Sigmoid colon (tissue), 7 donors: ENCODE measurements at regions of chr6 and their contacts with region 1.

Region 1: DNA sequence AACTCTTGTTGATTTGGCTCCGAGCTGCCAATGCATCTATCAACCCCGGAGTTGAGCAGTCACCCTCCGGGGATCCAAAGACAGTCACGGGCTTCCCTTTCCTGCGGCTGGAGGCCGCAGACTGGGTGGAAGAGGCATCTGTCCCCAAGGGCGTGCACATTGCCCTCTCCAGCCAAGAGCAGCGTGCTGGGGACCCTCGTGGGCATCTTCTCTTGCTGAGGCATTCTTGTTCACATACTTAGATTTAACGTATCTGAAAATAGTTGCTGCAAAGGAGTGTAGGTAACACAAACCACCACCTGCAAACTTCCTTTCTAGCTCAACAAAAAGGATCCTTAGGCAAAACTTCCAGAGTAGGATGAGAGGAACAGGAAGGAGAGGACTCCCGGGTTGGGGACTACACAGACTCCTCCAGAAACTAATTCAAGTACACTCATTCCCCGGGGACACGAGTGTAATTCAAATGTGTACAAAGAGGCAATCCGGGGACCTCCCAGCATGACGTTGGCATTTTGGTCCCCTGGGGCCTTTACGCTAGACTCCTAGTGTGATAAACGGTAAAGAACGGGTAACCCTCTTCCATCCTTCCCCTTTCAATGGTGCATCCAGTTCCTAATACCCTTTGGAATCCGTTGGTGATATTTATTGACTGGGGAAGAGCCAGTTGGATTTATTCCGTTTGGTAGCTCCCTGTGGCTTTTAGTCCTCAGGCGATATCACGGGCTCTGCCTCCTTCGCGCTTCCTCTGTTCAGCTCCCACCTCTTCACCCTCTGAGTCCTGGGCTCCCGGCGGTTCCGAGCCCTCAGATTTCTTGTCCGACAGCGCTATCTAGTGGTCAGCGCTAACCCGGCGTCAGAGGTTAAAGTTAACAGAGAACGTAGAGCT is 2.7 kb upstream of the COL12A1 start:
- DNase-seq: peak; percentile 93
- H3K4me3 ChIP-seq: peak overlapping the region in 1 of 4 donors; percentile 29
- H3K27ac ChIP-seq: peak overlapping the region; percentile 7 to 65 (median 40)
- H3K4me1 ChIP-seq: peaks cover 0 to 40% (median 12%) of the 10 kb centered on the region in 4 donors
- H3K27me3 ChIP-seq: no peaks in the 10 kb centered on the region
- CTCF ChIP-seq: peak; percentile 74 to 87 (median 82)
- EP300 ChIP-seq: no peak
- POLR2A ChIP-seq: no peak

Region 2: GRCh38 chr6:73675466-73676098 is 1533.0 kb before region 1 on chr6:
- intact Hi-C with region 1: loop called (anchors 5 kb)
- DNase-seq: peak; percentile 84
- H3K4me3 ChIP-seq: no peak overlapping the region
- H3K27ac ChIP-seq: no peak overlapping the region
- H3K4me1 ChIP-seq: peaks cover 0 to 7% (median 3%) of the 10 kb centered on the region in 4 donors
- H3K27me3 ChIP-seq: peaks cover 0 to 8% (median 0%) of the 10 kb centered on the region in 3 donors
- CTCF ChIP-seq: peak; percentile 81 to 84 (median 82)
- EP300 ChIP-seq: no peak
- POLR2A ChIP-seq: no peak

Region 3: DNA sequence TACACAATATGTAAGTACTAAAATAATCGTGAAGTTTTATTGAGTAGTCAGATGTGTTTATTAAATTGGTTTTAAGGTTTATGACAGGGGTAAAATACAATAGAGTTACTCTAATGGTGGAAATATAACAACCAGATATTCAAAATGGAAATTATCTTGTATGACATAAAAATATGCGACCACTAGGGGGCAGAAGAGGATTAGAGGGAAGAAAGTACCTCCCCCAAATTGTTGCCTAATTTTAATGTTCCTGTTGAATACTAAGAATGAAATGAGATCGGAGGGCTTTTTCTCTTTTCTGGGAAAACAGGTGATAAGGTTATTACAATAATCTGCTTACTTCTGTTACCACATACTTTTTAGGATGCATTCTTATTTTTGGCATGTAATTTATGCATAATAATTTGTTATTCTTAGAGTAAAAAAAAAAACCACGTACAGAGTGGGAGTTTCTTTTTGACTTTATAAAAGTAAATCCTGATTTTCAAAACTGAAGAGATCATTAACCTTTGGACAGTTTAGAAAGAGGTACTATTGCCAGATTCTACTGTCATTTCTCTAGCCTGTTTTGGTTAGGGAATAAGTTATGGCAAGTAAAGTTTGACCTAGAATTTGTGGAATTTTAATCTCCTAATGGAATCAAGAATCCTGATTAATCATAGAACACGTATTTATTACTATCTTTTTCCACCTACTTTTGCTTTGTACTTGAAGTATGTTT is 1353.4 kb before region 1 on chr6:
- intact Hi-C with region 1: loop called (anchors 2 kb)
- DNase-seq: no peak
- H3K4me3 ChIP-seq: peak overlapping the region; percentile 3 to 27 (median 12)
- H3K27ac ChIP-seq: peak overlapping the region in 3 of 4 donors; percentile 45 to 62 (median 57)
- H3K4me1 ChIP-seq: peaks cover 0 to 9% (median 5%) of the 10 kb centered on the region in 4 donors
- H3K27me3 ChIP-seq: no peaks in the 10 kb centered on the region
- CTCF ChIP-seq: peak; percentile 54 to 80 (median 59)
- EP300 ChIP-seq: no peak
- POLR2A ChIP-seq: no peak

Region 4: GRCh38 chr6:74087899-74088298 is 1120.6 kb before region 1 on chr6:
- intact Hi-C with region 1: loop called (anchors 2 kb)
- DNase-seq: no peak
- H3K4me3 ChIP-seq: no peak overlapping the region
- H3K27ac ChIP-seq: no peak overlapping the region
- H3K4me1 ChIP-seq: peaks cover 0 to 22% (median 14%) of the 10 kb centered on the region in 4 donors
- H3K27me3 ChIP-seq: no peaks in the 10 kb centered on the region
- CTCF ChIP-seq: no peak
- EP300 ChIP-seq: no peak
- POLR2A ChIP-seq: no peak

Region 5: GRCh38 chr6:74742793-74743508 is 465.6 kb before region 1 on chr6:
- intact Hi-C with region 1: loop called (anchors 5 kb)
- DNase-seq: no peak
- H3K4me3 ChIP-seq: no peak overlapping the region
- H3K27ac ChIP-seq: peak overlapping the region in 2 of 4 donors; percentile 11 to 62
- H3K4me1 ChIP-seq: peaks cover 0 to 43% (median 28%) of the 10 kb centered on the region in 4 donors
- H3K27me3 ChIP-seq: no peaks in the 10 kb centered on the region
- CTCF ChIP-seq: no peak
- EP300 ChIP-seq: no peak
- POLR2A ChIP-seq: no peak

Region 6: GRCh38 chr6:75098709-75099108 is 109.8 kb before region 1 on chr6:
- intact Hi-C with region 1: loop called (anchors 2 kb)
- DNase-seq: peak; percentile 91
- H3K4me3 ChIP-seq: no peak overlapping the region
- H3K27ac ChIP-seq: peak overlapping the region; percentile 67 to 82 (median 81)
- H3K4me1 ChIP-seq: peaks cover 0 to 44% (median 29%) of the 10 kb centered on the region in 4 donors
- H3K27me3 ChIP-seq: no peaks in the 10 kb centered on the region
- CTCF ChIP-seq: no peak
- EP300 ChIP-seq: no peak
- POLR2A ChIP-seq: no peak

Region 7: GRCh38 chr6:75147512-75147911 is 61.0 kb before region 1 on chr6:
- intact Hi-C with region 1: no loop called
- DNase-seq: no peak
- H3K4me3 ChIP-seq: no peak overlapping the region
- H3K27ac ChIP-seq: no peak overlapping the region
- H3K4me1 ChIP-seq: peaks cover 0 to 8% (median 0%) of the 10 kb centered on the region in 4 donors
- H3K27me3 ChIP-seq: no peaks in the 10 kb centered on the region
- CTCF ChIP-seq: no peak
- EP300 ChIP-seq: no peak
- POLR2A ChIP-seq: no peak

Region 8: GRCh38 chr6:75167325-75167724 is 41.2 kb before region 1 on chr6:
- intact Hi-C with region 1: no loop called
- DNase-seq: no peak
- H3K4me3 ChIP-seq: no peak overlapping the region
- H3K27ac ChIP-seq: peak overlapping the region in 1 of 4 donors; percentile 5
- H3K4me1 ChIP-seq: peaks cover 0 to 48% (median 43%) of the 10 kb centered on the region in 4 donors
- H3K27me3 ChIP-seq: no peaks in the 10 kb centered on the region
- CTCF ChIP-seq: no peak
- EP300 ChIP-seq: no peak
- POLR2A ChIP-seq: no peak